ENCODE measurements at regions of chr1 and their contacts with region 1.

Region 1: DNA sequence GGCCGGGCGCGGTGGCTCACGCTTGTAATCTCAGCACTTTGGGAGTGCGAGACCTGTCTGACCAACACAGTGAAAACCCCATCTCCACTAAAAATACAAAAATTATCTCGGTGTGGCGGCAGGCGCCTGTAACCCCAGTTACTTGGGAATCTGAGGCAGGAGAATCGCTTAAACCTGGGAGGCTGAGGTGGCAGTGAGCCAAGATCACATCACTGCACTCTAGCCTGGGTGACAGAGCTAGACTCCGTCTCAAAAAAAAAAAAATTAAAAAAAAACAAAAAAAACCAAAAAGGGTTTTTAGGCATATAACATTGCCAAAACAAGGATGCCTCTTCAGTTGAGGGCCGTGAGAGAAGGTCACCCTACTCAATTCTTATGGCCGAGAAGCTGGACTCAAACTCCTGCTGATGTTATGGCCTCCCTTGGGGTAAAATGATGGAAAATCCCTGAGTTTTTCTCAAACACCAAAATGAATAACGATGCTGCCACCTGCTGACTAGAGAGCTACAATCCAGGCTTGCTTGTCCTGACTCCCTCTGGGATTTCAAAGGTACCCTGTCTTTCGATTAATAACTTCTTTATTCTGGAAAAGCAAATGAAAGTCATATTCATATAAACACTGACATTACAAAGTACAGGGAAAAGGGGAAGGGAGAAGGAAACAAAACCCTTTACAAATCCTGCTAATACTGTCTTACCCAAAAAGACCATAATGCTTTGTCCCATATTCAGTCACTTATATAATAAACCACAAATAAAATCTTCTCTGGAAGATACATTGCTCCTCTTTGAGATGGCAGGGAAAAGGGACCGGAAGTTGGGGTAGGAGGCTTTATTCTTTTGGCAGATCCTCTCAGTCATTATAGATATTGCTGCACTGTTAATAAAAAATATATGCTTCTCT is 10.7 kb downstream of the RAB42 start:
- DNase-seq: peak; percentile 60
- CTCF ChIP-seq: peak; percentile 58

Region 2: GRCh38 chr1:28518000-28518744 is 84.6 kb before region 1 on chr1:
- in situ Hi-C with region 1: loop called (anchors 5 kb)
- DNase-seq: peak; percentile 90
- CTCF ChIP-seq: peak; percentile 96

Region 3: DNA sequence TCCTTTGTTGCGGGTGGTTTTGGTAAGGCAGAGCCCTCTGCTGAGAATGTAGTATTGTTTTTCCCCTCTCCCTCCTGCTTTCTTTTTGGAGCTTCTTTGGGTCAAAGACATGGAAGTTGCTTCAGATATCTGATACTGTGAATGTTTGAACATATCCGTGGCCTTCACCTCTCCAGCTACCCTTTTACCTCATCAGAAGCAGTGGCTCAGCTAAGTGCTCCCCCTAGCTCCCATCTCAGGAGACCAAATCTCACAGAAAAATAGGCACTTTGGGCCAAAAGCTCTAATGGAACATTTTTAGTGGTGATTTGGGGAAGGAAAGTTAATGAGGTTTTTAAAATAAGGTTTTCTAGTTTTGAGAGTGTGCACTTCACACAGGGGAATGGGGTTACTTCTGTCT is 514.6 kb after region 1 on chr1:
- in situ Hi-C with region 1: no loop called
- DNase-seq: no peak
- CTCF ChIP-seq: no peak

Measured in GM13976 (cell line).